CD8-positive, alpha-beta T cell (primary cell): ENCODE measurements at regions of chr15 and their contacts with region 1.

Region 1: GRCh38 chr15:25508369-25509002 is 69.7 kb upstream of the UBE3A start:
- DNase-seq: peak in 2 of 9 experiments; percentile 42 to 49
- ATAC-seq: no peak
- H3K4me3 ChIP-seq: no peak overlapping the region
- H3K4me3 Mint-ChIP-seq: no peak overlapping the region
- H3K27ac ChIP-seq: no peak overlapping the region
- H3K27ac Mint-ChIP-seq: no peak overlapping the region
- H3K4me1 ChIP-seq: no peaks in the 10 kb centered on the region
- H3K4me1 Mint-ChIP-seq: no peaks in the 10 kb centered on the region
- H3K27me3 ChIP-seq: no peaks in the 10 kb centered on the region
- H3K27me3 Mint-ChIP-seq: peaks cover 3% of the 10 kb centered on the region
- CTCF ChIP-seq: peak; percentile 45

Region 2: GRCh38 chr15:25416693-25417092 is 91.8 kb before region 1 on chr15:
- CTCF ChIA-PET with region 1: no interaction called
- POLR2A ChIA-PET with region 1: no interaction called
- intact Hi-C with region 1: no loop called
- DNase-seq: peak in 2 of 9 experiments; percentile 21 to 47
- ATAC-seq: no peak
- H3K4me3 ChIP-seq: no peak overlapping the region
- H3K4me3 Mint-ChIP-seq: peak overlapping the region; percentile 16
- H3K27ac ChIP-seq: no peak overlapping the region
- H3K27ac Mint-ChIP-seq: no peak overlapping the region
- H3K4me1 ChIP-seq: peaks cover 7% of the 10 kb centered on the region
- H3K4me1 Mint-ChIP-seq: peaks cover 76% of the 10 kb centered on the region
- H3K27me3 ChIP-seq: no peaks in the 10 kb centered on the region
- H3K27me3 Mint-ChIP-seq: no peaks in the 10 kb centered on the region
- CTCF ChIP-seq: no peak

Region 3: GRCh38 chr15:25465835-25466234 is 42.7 kb before region 1 on chr15:
- CTCF ChIA-PET with region 1: no interaction called
- POLR2A ChIA-PET with region 1: no interaction called
- intact Hi-C with region 1: no loop called
- DNase-seq: no peak
- ATAC-seq: no peak
- H3K4me3 ChIP-seq: no peak overlapping the region
- H3K4me3 Mint-ChIP-seq: no peak overlapping the region
- H3K27ac ChIP-seq: no peak overlapping the region
- H3K27ac Mint-ChIP-seq: no peak overlapping the region
- H3K4me1 ChIP-seq: no peaks in the 10 kb centered on the region
- H3K4me1 Mint-ChIP-seq: no peaks in the 10 kb centered on the region
- H3K27me3 ChIP-seq: no peaks in the 10 kb centered on the region
- H3K27me3 Mint-ChIP-seq: peaks cover 10% of the 10 kb centered on the region
- CTCF ChIP-seq: no peak

Region 4: GRCh38 chr15:25568751-25569150 is 60.3 kb after region 1 on chr15:
- CTCF ChIA-PET with region 1: no interaction called
- POLR2A ChIA-PET with region 1: no interaction called
- intact Hi-C with region 1: no loop called
- DNase-seq: no peak
- ATAC-seq: no peak
- H3K4me3 ChIP-seq: no peak overlapping the region
- H3K4me3 Mint-ChIP-seq: no peak overlapping the region
- H3K27ac ChIP-seq: no peak overlapping the region
- H3K27ac Mint-ChIP-seq: no peak overlapping the region
- H3K4me1 ChIP-seq: no peaks in the 10 kb centered on the region
- H3K4me1 Mint-ChIP-seq: no peaks in the 10 kb centered on the region
- H3K27me3 ChIP-seq: no peaks in the 10 kb centered on the region
- H3K27me3 Mint-ChIP-seq: no peaks in the 10 kb centered on the region
- CTCF ChIP-seq: no peak

Region 5: DNA sequence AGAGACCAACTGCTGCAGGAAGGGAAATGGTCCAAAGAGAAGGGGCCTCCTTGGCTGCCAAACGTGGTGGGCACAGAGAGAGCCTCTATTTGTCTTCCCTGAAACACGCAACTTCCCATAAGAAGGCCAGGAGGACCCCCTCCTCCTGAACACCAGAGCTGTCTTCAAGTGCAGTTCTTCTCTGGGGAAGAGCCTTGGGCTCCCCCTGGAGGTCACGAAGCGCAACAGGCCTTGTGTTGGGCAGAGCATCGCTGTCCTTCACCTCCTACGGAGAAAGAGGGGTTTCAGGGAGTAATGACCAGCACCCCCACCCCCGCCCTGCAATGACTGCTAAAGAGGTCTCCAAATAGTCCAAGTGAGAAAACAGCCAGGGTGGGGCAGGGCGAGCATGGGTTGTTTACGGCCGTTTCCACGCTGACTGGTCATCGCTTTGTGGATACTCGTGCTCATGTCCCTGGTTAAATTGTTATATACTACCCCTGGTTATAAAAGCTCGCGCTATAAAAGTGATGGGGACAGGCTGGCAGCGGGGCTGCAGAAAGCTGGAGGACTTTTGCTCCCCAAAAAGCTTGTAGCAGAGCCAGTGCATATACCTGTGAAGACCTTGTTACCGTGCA is 752.1 kb after region 1 on chr15:
- CTCF ChIA-PET with region 1: interaction called, 12 read pairs
- POLR2A ChIA-PET with region 1: no interaction called
- intact Hi-C with region 1: loop called in 1 of 2 experiments (anchors 1 kb)
- DNase-seq: peak in 4 of 9 experiments; percentile 23 to 39 (median 28)
- ATAC-seq: no peak
- H3K4me3 ChIP-seq: no peak overlapping the region
- H3K4me3 Mint-ChIP-seq: no peak overlapping the region
- H3K27ac ChIP-seq: no peak overlapping the region
- H3K27ac Mint-ChIP-seq: no peak overlapping the region
- H3K4me1 ChIP-seq: no peaks in the 10 kb centered on the region
- H3K4me1 Mint-ChIP-seq: no peaks in the 10 kb centered on the region
- H3K27me3 ChIP-seq: no peaks in the 10 kb centered on the region
- H3K27me3 Mint-ChIP-seq: peaks cover 2% of the 10 kb centered on the region
- CTCF ChIP-seq: peak; percentile 57